Ovary (tissue), 10 donors: ENCODE measurements at regions of chr1 and their contacts with region 1.

Region 1: DNA sequence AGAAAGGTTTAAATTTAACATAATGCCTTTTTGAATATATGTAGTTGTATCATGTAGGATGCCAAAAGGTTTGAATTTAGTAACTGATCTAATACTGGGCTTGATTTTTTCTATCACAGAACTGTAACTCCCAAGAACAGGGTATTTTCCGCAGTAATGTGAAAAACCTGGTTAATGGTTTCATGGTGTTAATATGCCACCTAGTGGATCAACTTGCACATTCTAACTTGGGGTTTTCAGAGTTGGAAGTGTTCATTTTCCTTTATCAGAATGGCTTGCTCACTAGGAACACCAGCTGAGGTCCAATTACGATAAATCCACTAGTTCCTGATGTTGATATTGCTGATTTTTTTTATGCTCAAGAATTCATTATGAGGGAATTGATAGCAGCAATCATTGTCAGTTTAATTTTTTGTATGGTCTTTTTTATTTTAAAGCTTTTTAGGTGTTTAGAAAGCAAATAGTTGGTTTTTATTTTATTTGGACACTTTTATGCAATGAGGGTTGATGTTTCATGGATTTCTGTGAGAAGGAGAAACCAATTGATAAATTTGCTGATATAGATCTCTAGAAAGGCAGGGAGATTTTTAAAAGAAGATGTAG is 157.2 kb downstream of the PLA2G4A start:
- DNase-seq: no peak
- H3K4me3 ChIP-seq: no peak overlapping the region
- H3K27ac ChIP-seq: no peak overlapping the region
- H3K4me1 ChIP-seq: no peaks in the 10 kb centered on the region
- H3K27me3 ChIP-seq: no peaks in the 10 kb centered on the region
- CTCF ChIP-seq: peak; percentile 18 to 70 (median 57)
- EP300 ChIP-seq: no peak
- POLR2A ChIP-seq: no peak

Region 2: GRCh38 chr1:186393476-186393875 is 592.5 kb before region 1 on chr1:
- intact Hi-C with region 1: loop called in 1 of 4 experiments (anchors 10 kb)
- DNase-seq: no peak
- H3K4me3 ChIP-seq: no peak overlapping the region
- H3K27ac ChIP-seq: no peak overlapping the region
- H3K4me1 ChIP-seq: no peaks in the 10 kb centered on the region
- H3K27me3 ChIP-seq: no peaks in the 10 kb centered on the region
- CTCF ChIP-seq: no peak
- EP300 ChIP-seq: no peak
- POLR2A ChIP-seq: no peak

Region 3: GRCh38 chr1:186482661-186483255 is 503.2 kb before region 1 on chr1:
- intact Hi-C with region 1: loop called in 1 of 4 experiments (anchors 10 kb)
- DNase-seq: peak; percentile 12 to 60 (median 48)
- H3K4me3 ChIP-seq: no peak overlapping the region
- H3K27ac ChIP-seq: no peak overlapping the region
- H3K4me1 ChIP-seq: no peaks in the 10 kb centered on the region
- H3K27me3 ChIP-seq: no peaks in the 10 kb centered on the region
- CTCF ChIP-seq: peak; percentile 29 to 35 (median 33)
- EP300 ChIP-seq: no peak
- POLR2A ChIP-seq: no peak

Region 4: GRCh38 chr1:186605762-186606350 is 380.1 kb before region 1 on chr1:
- intact Hi-C with region 1: loop called in 1 of 4 experiments (anchors 10 kb)
- DNase-seq: peak in 1 of 5 donors; percentile 35
- H3K4me3 ChIP-seq: no peak overlapping the region
- H3K27ac ChIP-seq: no peak overlapping the region
- H3K4me1 ChIP-seq: no peaks in the 10 kb centered on the region
- H3K27me3 ChIP-seq: no peaks in the 10 kb centered on the region
- CTCF ChIP-seq: no peak
- EP300 ChIP-seq: no peak
- POLR2A ChIP-seq: no peak

Region 5: GRCh38 chr1:187096689-187097088 is 110.7 kb after region 1 on chr1:
- intact Hi-C with region 1: no loop called
- DNase-seq: no peak
- H3K4me3 ChIP-seq: no peak overlapping the region
- H3K27ac ChIP-seq: no peak overlapping the region
- H3K4me1 ChIP-seq: no peaks in the 10 kb centered on the region
- H3K27me3 ChIP-seq: no peaks in the 10 kb centered on the region
- CTCF ChIP-seq: no peak
- EP300 ChIP-seq: no peak
- POLR2A ChIP-seq: no peak